Sigmoid colon (tissue), 7 donors: ENCODE measurements at regions of chr15 and their contacts with region 1.

Region 1: DNA sequence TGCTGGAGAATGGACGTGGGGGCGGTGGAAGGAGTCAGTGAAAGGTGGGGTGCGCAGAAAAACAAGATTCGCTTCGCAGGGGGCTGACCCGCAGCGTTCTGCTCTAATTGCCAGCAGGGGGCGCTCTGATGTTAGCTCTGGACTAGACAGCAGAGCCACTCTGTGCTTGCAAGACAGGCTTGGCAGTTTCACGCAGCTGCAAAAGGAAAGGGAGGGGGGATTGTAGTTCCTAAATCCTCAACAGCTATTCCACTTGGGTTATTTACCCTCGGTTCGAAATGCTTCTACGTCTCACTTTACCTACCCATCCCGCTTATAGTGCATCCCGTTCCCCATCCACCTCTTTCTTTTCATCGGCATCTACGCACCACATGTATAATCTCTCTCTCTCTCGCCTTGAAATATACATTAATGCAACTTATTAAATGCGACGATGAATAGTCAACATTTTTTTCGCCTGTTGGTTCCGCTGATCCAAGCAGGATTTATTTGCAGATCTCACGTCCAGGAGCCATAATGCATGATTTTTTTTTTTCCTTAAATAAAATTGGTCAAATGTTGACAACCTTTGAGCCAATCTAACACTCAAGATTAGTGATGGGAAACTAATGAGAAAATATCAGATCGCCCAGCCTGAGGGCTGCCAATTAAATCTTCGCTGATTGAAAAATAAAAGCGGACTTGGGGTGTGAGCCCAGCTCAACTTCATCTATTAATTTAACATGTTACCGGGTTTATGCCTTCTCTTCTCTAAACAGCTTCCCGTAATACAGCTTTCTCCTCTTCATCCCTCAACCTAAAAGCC is 216.4 kb downstream of the MEIS2 start:
- DNase-seq: peak; percentile 96
- H3K4me3 ChIP-seq: peak overlapping the region; percentile 26 to 47 (median 34)
- H3K27ac ChIP-seq: peak overlapping the region; percentile 56 to 84 (median 78)
- H3K4me1 ChIP-seq: peaks cover 0 to 45% (median 35%) of the 10 kb centered on the region in 4 donors
- H3K27me3 ChIP-seq: peaks cover 0 to 9% (median 0%) of the 10 kb centered on the region in 3 donors
- CTCF ChIP-seq: peak; percentile 85 to 88 (median 88)
- EP300 ChIP-seq: no peak
- POLR2A ChIP-seq: no peak

Region 2: DNA sequence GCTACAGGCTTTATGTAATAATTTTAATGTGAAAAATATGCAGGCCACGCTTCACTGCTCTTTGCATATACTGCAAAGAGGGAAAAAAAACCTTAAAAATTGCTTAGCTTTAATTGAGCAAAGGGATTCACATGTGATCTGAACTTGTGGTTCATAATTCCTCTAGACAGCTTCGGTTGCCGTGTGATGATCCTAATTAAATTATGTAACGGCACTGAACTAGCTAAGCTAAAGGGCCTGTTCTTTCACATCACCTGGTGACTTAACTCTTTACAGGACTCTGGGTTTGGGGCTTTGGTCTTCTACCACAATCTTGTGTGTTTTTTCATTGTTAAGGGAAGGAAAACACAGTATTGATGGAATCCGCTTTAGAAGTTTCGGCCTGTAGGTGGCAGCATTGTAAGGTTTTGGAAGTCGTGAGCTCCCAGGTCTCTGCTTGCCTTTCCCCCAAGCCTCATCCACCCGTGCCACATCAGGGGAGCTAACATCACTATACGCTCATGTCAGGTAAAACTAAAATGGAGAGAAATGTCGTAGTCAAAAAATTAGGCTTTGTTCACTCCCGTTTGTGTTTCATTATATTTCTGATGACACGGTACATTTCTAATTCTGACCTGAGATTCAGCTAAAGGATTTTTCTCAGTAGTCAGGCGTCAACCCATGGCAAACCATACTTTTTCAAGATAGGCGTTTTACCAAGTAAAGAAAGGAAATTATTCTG is 1132.3 kb before region 1 on chr15:
- intact Hi-C with region 1: loop called (anchors 10 kb)
- DNase-seq: peak; percentile 84
- H3K4me3 ChIP-seq: no peak overlapping the region
- H3K27ac ChIP-seq: no peak overlapping the region
- H3K4me1 ChIP-seq: peaks cover 0 to 20% (median 0%) of the 10 kb centered on the region in 4 donors
- H3K27me3 ChIP-seq: no peaks in the 10 kb centered on the region
- CTCF ChIP-seq: peak; percentile 8 to 72 (median 48)
- EP300 ChIP-seq: no peak
- POLR2A ChIP-seq: no peak

Region 3: DNA sequence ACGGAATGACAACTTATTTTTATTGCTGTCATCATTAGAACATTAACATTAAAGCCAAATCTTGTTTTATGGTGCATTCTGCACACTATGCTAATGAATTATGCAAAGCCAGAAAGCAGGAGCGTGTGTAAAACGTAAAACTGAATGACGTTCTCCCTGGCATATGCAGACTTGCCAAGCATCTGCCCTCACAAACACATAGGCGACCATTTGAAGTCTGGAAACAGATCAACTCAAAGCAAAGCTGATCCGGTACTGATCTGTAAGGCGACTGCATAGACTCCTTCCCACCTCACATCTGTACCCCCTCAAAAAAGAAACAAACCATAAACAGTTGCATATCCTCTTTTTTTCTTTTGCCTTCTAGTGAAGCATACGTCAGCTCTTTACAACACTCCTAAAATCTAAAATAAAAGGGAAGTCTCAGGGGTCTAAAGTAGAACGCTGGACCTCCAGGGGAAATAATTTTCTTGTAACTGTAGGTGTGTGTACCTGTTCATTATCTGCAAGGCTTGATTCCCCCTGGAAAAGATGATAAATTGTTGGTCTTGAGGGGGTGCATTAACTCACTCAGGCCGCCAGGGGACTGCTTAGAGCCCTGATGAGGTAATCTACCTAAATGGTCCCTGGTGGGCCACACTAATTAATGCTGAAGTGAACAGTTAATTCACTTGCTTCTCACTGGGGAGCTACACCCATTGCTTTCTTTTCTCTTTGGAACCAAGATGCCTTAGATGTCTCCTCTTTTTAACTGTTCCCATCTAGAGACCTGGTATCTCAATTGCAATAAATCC is 73.1 kb before region 1 on chr15:
- intact Hi-C with region 1: loop called (anchors 5 kb)
- DNase-seq: no peak
- H3K4me3 ChIP-seq: no peak overlapping the region
- H3K27ac ChIP-seq: peak overlapping the region; percentile 65 to 76 (median 72)
- H3K4me1 ChIP-seq: peaks cover 0 to 83% (median 65%) of the 10 kb centered on the region in 4 donors
- H3K27me3 ChIP-seq: no peaks in the 10 kb centered on the region
- CTCF ChIP-seq: peak in 2 of 4 experiments; percentile 37 to 44
- EP300 ChIP-seq: peak in 1 of 4 donors; percentile 54
- POLR2A ChIP-seq: no peak

Region 4: GRCh38 chr15:37100109-37100965 is 216.4 kb after region 1 on chr15 and contains the start of gene MEIS2:
- intact Hi-C with region 1: loop called (anchors 2 kb)
- DNase-seq: peak; percentile 98
- H3K4me3 ChIP-seq: peak within 1 kb of the TSS; percentile 83 to 87 (median 84)
- H3K27ac ChIP-seq: peak within 1 kb of the TSS; percentile 95 to 97 (median 96)
- H3K4me1 ChIP-seq: no peaks in the 10 kb centered on the region
- H3K27me3 ChIP-seq: no peaks in the 10 kb centered on the region
- CTCF ChIP-seq: no peak
- EP300 ChIP-seq: peak in 1 of 4 donors; percentile 30
- POLR2A ChIP-seq: peak; percentile 50 to 69
- total RNA-seq, gene MEIS2: 76.0 to 154 (median 85.1) TPM

Region 5: GRCh38 chr15:37134699-37135131 is 250.8 kb after region 1 on chr15:
- intact Hi-C with region 1: loop called (anchors 2 kb)
- DNase-seq: no peak
- H3K4me3 ChIP-seq: no peak overlapping the region
- H3K27ac ChIP-seq: no peak overlapping the region
- H3K4me1 ChIP-seq: peaks cover 0 to 42% (median 21%) of the 10 kb centered on the region in 4 donors
- H3K27me3 ChIP-seq: no peaks in the 10 kb centered on the region
- CTCF ChIP-seq: peak; percentile 64 to 84 (median 73)
- EP300 ChIP-seq: no peak
- POLR2A ChIP-seq: no peak